ENCODE measurements at regions of chr9 and their contacts with region 1.

Region 1: DNA sequence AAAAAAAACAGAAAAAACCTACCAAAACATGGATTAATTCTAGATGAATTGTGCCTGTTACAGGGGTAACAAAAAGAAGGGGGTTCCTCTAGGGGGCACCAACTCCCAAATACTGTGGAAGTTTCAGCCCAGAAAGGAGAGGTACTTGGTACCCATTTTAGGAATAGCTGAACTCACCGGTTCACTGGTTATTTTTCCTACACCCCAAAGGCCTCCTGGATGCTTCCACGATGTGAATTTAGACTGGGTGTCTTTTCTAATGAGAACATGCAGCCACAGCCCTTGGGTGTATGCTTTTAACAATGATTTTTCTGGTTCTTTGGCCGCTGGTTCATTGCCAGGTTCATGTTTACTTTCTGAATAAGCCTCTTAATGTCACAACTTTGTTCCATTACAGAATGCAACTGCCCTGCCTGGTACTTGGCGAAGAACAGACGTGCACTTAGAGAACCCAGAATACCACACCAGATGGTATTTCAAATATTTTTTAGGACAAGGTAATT is 46.7 kb downstream of the GARNL3 start:
- DNase-seq: peak in 1 of 5 donors; percentile 24
- H3K4me3 ChIP-seq: no peak overlapping the region
- H3K27ac ChIP-seq: no peak overlapping the region
- H3K4me1 ChIP-seq: no peaks in the 10 kb centered on the region
- H3K27me3 ChIP-seq: no peaks in the 10 kb centered on the region
- CTCF ChIP-seq: no peak
- EP300 ChIP-seq: no peak
- POLR2A ChIP-seq: no peak

Region 2: GRCh38 chr9:127244609-127245601 is 66.4 kb before region 1 on chr9:
- intact Hi-C with region 1: loop called in 1 of 4 experiments (anchors 10 kb)
- DNase-seq: peak; percentile 95 to 97 (median 96)
- H3K4me3 ChIP-seq: peak overlapping the region; percentile 52
- H3K27ac ChIP-seq: peak overlapping the region in 1 of 2 donors; percentile 59
- H3K4me1 ChIP-seq: peaks cover 4% of the 10 kb centered on the region
- H3K27me3 ChIP-seq: no peaks in the 10 kb centered on the region
- CTCF ChIP-seq: no peak
- EP300 ChIP-seq: no peak
- POLR2A ChIP-seq: peak; percentile 40

Measured in ovary (tissue), 10 donors.